ENCODE measurements at regions of chr12 and their contacts with region 1.

Region 1: GRCh38 chr12:124001343-124001742 is 28.3 kb downstream of the ZNF664 start:
- DNase-seq: no peak
- H3K4me3 ChIP-seq: no peak overlapping the region
- H3K27ac ChIP-seq: no peak overlapping the region
- H3K4me1 ChIP-seq: no peaks in the 10 kb centered on the region
- H3K27me3 ChIP-seq: no peaks in the 10 kb centered on the region
- CTCF ChIP-seq: no peak

Region 2: DNA sequence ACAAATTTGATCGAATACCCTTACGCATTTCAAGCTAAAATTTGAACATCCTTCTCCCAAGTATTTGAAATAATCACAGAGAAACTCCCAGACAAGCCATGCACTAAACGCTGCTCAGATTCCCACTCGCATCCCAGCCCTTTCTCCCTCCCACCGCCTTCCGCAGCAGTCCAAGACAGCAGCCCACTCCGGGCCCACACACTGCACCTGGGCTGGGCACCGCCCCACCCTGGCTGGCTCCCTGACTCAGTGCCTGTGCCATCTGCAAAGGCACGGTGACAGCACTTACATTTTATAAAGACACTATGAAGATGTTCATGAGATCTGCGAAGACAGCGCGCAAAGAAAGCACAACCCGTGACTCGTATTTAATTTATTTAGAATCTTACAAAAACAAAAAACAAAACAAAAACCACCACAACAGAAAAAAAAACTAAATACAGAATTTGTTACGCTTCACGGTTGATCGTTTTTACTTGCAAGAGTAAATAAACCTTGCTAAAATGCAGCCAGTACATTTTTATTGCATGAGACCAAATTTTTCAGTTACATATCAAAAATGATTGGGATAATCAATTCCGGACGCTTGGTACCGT is 712.5 kb before region 1 on chr12:
- CTCF ChIA-PET with region 1: no interaction called
- POLR2A ChIA-PET with region 1: no interaction called
- intact Hi-C with region 1: no loop called
- DNase-seq: no peak
- H3K4me3 ChIP-seq: no peak overlapping the region
- H3K27ac ChIP-seq: no peak overlapping the region
- H3K4me1 ChIP-seq: no peaks in the 10 kb centered on the region
- H3K27me3 ChIP-seq: no peaks in the 10 kb centered on the region
- CTCF ChIP-seq: no peak

Region 3: DNA sequence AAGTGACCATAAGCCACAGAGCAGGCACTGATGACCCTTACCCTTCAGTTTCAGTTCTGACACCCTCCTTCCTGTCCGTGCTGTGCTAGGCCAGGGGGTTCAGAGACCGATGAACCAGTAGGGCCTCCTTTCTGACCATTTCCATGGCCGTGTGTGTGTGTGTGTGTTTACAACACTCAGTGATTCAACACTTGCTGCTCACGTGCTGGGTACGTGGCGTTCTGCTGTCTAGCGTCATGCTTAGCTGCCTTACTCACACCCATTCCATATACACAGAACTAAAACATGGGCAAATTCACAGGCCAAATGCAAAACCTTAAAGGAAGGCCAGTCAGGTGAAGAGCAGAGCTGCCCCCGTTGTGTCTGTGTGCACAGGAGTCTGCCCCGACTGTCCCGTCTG is 171.8 kb before region 1 on chr12:
- CTCF ChIA-PET with region 1: no interaction called
- POLR2A ChIA-PET with region 1: no interaction called
- intact Hi-C with region 1: no loop called
- DNase-seq: no peak
- H3K4me3 ChIP-seq: no peak overlapping the region
- H3K27ac ChIP-seq: no peak overlapping the region
- H3K4me1 ChIP-seq: no peaks in the 10 kb centered on the region
- H3K27me3 ChIP-seq: peaks cover 63% of the 10 kb centered on the region
- CTCF ChIP-seq: no peak

Region 4: GRCh38 chr12:123854918-123855317 is 146.4 kb before region 1 on chr12:
- CTCF ChIA-PET with region 1: no interaction called
- POLR2A ChIA-PET with region 1: no interaction called
- intact Hi-C with region 1: no loop called
- DNase-seq: no peak
- H3K4me3 ChIP-seq: no peak overlapping the region
- H3K27ac ChIP-seq: no peak overlapping the region
- H3K4me1 ChIP-seq: no peaks in the 10 kb centered on the region
- H3K27me3 ChIP-seq: peaks cover 78% of the 10 kb centered on the region
- CTCF ChIP-seq: no peak

Region 5: DNA sequence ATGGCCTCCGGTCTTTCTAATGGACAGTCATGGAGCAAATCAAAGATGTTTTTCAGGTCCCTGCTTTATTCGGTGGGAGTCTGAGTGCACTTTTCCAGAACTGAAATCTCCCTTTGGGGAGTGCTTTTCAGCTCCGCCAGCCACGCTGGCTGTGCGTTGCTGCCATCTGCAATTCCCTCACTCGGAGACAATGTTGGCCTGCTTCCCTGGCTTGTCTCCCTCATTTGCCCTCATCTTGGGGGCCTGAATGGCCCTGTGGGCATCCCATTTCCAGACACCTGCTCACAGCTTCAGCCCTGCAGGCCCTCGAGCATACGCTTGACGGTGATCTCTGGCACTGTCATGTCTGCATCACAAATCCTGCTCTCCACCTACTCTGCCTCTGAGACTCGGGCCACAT is 132.6 kb before region 1 on chr12:
- CTCF ChIA-PET with region 1: no interaction called
- POLR2A ChIA-PET with region 1: interaction called, 10 read pairs
- intact Hi-C with region 1: no loop called
- DNase-seq: no peak
- H3K4me3 ChIP-seq: no peak overlapping the region
- H3K27ac ChIP-seq: no peak overlapping the region
- H3K4me1 ChIP-seq: no peaks in the 10 kb centered on the region
- H3K27me3 ChIP-seq: peaks cover 96% of the 10 kb centered on the region
- CTCF ChIP-seq: no peak

Measured in PC-9 (cell line).